Left ventricle myocardium inferior (tissue), 1 donor: ENCODE measurements at regions of chr6 and their contacts with region 1.

Region 1: GRCh38 chr6:56542364-56543331 is 100.0 kb downstream of the DST start:
- DNase-seq: peak; percentile 92
- H3K4me3 ChIP-seq: peak overlapping the region; percentile 72
- H3K27ac ChIP-seq: peak overlapping the region; percentile 97
- H3K4me1 ChIP-seq: peaks cover 68% of the 10 kb centered on the region
- H3K27me3 ChIP-seq: no peaks in the 10 kb centered on the region
- CTCF ChIP-seq: peak; percentile 63

Region 2: DNA sequence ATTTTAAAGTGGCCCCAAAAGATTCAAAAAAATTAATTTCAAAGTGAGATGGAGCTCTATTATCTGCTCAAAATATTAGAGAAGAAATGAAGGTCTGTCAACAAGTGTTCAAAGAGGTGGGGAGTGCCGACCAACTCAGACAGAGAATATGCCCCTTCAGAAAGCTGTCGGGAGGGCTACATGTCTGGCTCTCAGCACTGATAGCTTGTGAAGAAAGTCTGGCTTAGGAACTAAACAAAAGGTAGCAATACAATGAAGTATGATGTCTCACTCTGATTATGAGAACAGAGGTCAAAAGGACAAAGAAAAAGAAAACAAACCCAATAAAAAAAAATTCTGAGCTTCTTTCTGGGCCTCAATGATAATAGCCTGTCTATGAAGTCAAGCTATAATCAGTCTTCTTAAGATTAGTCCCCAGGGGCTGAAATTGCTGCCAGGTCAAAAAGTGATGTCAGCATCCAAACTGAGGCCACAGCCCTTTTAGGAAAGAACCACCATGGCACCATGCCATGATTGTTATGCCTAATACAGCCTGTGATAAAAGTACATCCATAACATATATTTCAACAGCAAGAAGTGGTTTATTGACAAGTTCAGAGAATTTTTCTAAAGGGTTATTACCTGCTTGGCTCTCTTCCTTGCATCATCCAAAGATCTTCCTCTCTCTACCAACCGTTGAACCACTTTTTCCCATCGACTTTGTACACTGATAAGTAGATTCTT is 50.9 kb before region 1 on chr6:
- intact Hi-C with region 1: loop called (anchors 10 kb)
- DNase-seq: peak; percentile 34
- H3K4me3 ChIP-seq: no peak overlapping the region
- H3K27ac ChIP-seq: peak overlapping the region; percentile 62
- H3K4me1 ChIP-seq: peaks cover 23% of the 10 kb centered on the region
- H3K27me3 ChIP-seq: no peaks in the 10 kb centered on the region
- CTCF ChIP-seq: no peak

Region 3: DNA sequence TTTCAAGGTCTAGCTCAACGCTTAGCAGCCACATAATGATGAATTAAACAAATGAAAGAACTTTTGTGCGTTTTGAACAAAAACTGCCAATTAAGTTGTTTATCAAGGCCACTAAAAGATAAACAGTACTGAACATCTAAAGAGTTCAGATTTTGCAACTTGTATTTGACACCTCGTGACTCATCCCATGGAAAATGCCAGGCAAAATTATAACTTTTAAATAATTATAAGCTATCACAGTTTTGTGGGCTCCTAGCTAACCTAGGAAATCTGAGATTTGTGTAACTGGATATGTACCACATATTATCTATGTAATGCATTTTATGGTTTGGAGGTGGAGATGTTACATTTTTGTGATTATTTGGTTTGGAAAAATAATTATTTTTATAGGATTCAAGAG is 619.9 kb after region 1 on chr6:
- intact Hi-C with region 1: no loop called
- DNase-seq: no peak
- H3K4me3 ChIP-seq: no peak overlapping the region
- H3K27ac ChIP-seq: no peak overlapping the region
- H3K4me1 ChIP-seq: no peaks in the 10 kb centered on the region
- H3K27me3 ChIP-seq: no peaks in the 10 kb centered on the region
- CTCF ChIP-seq: no peak